ENCODE measurements at regions of chr17 and their contacts with region 1.

Region 1: GRCh38 chr17:40139566-40140058 is 725 bp upstream of the CASC3 start:
- DNase-seq: no peak
- ATAC-seq: peak; percentile 5
- H3K4me3 Mint-ChIP-seq: peak overlapping the region; percentile 81
- H3K27ac Mint-ChIP-seq: peak overlapping the region; percentile 97
- H3K4me1 Mint-ChIP-seq: peaks cover 39% of the 10 kb centered on the region
- H3K27me3 Mint-ChIP-seq: no peaks in the 10 kb centered on the region
- CTCF ChIP-seq: no peak

Region 2: GRCh38 chr17:39777534-39778365 is 361.9 kb before region 1 on chr17:
- CTCF ChIA-PET with region 1: no interaction called
- POLR2A ChIA-PET with region 1: no interaction called
- intact Hi-C with region 1: no loop called
- DNase-seq: peak; percentile 28
- ATAC-seq: peak; percentile 67
- H3K4me3 Mint-ChIP-seq: peak overlapping the region; percentile 70
- H3K27ac Mint-ChIP-seq: peak overlapping the region; percentile 85
- H3K4me1 Mint-ChIP-seq: peaks cover 83% of the 10 kb centered on the region
- H3K27me3 Mint-ChIP-seq: no peaks in the 10 kb centered on the region
- CTCF ChIP-seq: no peak

Region 3: GRCh38 chr17:40098846-40099618 is 40.6 kb before region 1 on chr17:
- CTCF ChIA-PET with region 1: no interaction called
- POLR2A ChIA-PET with region 1: interaction called, 10 read pairs
- intact Hi-C with region 1: no loop called
- DNase-seq: peak; percentile 100
- ATAC-seq: peak; percentile 72
- H3K4me3 Mint-ChIP-seq: peak overlapping the region; percentile 85
- H3K27ac Mint-ChIP-seq: peak overlapping the region; percentile 90
- H3K4me1 Mint-ChIP-seq: peaks cover 72% of the 10 kb centered on the region
- H3K27me3 Mint-ChIP-seq: no peaks in the 10 kb centered on the region
- CTCF ChIP-seq: no peak

Region 4: GRCh38 chr17:40121181-40122135 is 18.2 kb before region 1 on chr17 and contains the start of gene MSL1:
- CTCF ChIA-PET with region 1: interaction called, 14 read pairs
- POLR2A ChIA-PET with region 1: interaction called, 50 read pairs
- intact Hi-C with region 1: no loop called
- DNase-seq: peak; percentile 85
- ATAC-seq: peak; percentile 76
- H3K4me3 Mint-ChIP-seq: peak within 1 kb of the TSS; percentile 93
- H3K27ac Mint-ChIP-seq: peak within 1 kb of the TSS; percentile 76
- H3K4me1 Mint-ChIP-seq: peaks cover 31% of the 10 kb centered on the region
- H3K27me3 Mint-ChIP-seq: no peaks in the 10 kb centered on the region
- CTCF ChIP-seq: no peak
- total RNA-seq, gene MSL1: 69.0 to 70.1 TPM

Region 5: GRCh38 chr17:40157973-40158372 is 18.4 kb after region 1 on chr17:
- CTCF ChIA-PET with region 1: interaction called, 3 read pairs
- POLR2A ChIA-PET with region 1: interaction called, 18 read pairs
- intact Hi-C with region 1: no loop called
- DNase-seq: no peak
- ATAC-seq: no peak
- H3K4me3 Mint-ChIP-seq: no peak overlapping the region
- H3K27ac Mint-ChIP-seq: peak overlapping the region; percentile 79
- H3K4me1 Mint-ChIP-seq: peaks cover 31% of the 10 kb centered on the region
- H3K27me3 Mint-ChIP-seq: no peaks in the 10 kb centered on the region
- CTCF ChIP-seq: no peak

Region 6: GRCh38 chr17:40168262-40168832 is 28.7 kb after region 1 on chr17:
- CTCF ChIA-PET with region 1: interaction called, 18 read pairs
- POLR2A ChIA-PET with region 1: interaction called, 3 read pairs
- intact Hi-C with region 1: no loop called
- DNase-seq: peak; percentile 50
- ATAC-seq: peak; percentile 89
- H3K4me3 Mint-ChIP-seq: no peak overlapping the region
- H3K27ac Mint-ChIP-seq: peak overlapping the region; percentile 36
- H3K4me1 Mint-ChIP-seq: peaks cover 7% of the 10 kb centered on the region
- H3K27me3 Mint-ChIP-seq: no peaks in the 10 kb centered on the region
- CTCF ChIP-seq: peak; percentile 96